ENCODE measurements at regions of chr11 and their contacts with region 1.

Region 1: DNA sequence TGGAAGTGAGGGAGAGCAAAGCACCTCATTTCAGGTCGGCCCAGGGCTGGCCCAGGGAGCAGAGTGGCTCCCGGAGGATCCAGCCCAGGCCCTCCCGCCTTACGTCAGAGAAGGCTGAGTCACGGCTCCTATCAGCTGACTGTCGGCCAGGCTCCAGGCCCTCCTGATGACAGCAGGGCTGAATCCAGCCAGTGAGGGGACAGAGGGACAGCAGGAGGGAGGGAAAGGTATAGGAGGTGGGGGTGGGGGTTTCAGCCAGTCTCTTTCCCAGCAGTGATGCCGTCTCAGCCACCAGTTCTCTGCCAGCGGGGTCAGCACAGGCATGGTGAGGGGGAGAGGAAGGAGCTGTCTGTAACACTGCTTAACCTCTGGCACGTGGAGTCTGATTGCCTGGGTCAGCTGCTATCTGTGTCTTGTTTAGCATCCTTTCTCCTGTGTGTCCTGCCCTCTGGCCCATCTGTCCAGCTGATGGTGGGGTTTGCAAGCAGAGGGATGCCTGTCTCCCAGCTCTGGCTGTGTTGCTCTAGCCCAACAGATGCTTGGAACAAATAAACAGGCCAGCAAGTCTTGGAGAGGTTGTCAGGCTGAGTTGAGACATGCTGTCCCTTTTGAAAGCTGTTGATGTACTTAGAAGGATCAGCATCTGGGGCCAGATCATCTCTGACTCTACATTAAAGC is 74.0 kb downstream of the ADAMTS15 start:
- DNase-seq: peak; percentile 96
- ATAC-seq: peak; percentile 94

Region 2: GRCh38 chr11:130457623-130458409 is 64.6 kb before region 1 on chr11:
- intact Hi-C with region 1: loop called (anchors 5 kb)
- DNase-seq: peak; percentile 75
- ATAC-seq: peak; percentile 16

Region 3: DNA sequence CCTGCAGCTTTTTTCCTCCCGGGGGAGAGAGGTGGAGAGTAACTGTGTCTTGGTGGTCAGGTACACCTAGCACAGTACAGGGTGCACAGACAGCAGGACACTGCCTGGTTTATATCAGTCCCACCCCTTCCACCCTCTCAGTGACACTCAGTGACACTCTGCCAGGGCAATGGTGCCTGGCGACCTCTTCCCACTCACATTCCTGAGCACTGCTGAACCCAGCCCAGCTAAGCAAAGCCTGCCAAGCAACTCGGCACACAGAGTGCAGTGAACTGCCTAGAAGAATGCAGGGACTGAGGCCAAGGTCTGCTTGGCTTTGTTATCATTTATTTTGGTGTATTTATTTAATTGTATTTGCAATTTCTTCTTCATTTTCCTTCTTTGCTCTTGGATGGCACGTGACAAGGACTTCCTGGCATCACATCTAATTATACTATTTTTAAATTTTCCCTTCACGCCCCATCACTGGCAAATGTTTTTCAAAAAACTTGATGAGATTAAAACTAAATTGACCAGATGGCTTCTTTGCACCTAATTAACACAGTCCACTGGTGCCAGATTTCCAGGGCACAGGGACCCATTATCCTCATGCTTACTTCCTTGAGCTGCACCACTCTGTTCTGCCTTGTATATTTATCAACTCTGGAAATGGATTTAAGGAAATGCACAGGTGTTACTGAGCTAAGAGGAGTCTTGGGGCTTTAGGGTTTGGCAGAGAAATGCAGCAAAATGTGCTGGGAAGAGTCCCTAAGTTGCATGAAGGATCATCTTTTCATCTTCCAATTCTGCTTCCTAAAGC is 131.6 kb after region 1 on chr11:
- intact Hi-C with region 1: loop called (anchors 5 kb)
- DNase-seq: peak; percentile 92
- ATAC-seq: peak; percentile 92

Region 4: DNA sequence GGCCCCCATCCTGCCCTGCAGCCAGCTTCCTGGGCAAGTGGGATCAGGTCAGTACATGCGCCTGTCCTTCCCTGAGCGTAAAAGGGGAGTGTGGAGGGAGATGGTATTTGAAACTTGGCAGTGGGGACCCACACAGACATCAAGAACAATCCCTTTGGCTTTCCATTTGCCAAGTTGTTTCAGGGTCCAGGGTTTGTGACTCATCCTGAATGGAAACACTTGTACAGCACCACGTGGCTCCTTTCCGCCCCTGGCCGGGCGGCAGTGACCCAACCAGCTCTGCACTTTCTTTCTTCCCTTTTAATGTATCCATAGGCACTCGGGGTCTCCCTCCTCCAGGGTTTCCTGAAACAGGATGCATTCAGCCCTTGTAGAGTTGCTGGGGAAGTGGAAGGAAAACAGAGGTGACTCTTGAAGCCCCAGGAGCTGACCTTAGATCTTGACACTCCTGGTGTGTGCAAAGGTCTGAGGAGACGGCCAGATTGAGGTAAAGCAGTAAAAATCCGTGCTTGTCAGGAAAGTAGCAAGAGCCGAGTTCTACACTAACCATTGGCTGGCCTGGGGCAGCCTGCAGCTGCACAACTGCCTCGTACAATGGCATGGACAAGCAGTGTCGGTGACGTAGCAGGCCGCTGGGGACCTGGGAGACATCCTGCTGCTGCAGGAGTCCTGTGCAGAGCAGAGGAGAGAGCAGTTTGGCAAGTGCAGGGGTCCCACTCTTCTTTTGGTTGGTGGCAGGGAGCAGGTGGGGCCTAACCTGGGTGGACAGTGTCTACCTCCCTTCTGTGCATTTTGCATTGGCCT is 204.0 kb after region 1 on chr11:
- intact Hi-C with region 1: no loop called
- DNase-seq: peak; percentile 62
- ATAC-seq: peak; percentile 87